GM12878 (cell line): ENCODE measurements at regions of chr9 and their contacts with region 1.

Region 1: GRCh38 chr9:126965541-126966428 is 51.2 kb downstream of the RALGPS1 start:
- DNase-seq: no peak
- ATAC-seq: peak; percentile 99
- H3K4me3 ChIP-seq: no peak overlapping the region
- H3K27ac ChIP-seq: no peak overlapping the region
- H3K4me1 ChIP-seq: no peaks in the 10 kb centered on the region
- H3K27me3 ChIP-seq: no peaks in the 10 kb centered on the region
- CTCF ChIP-seq: peak; percentile 82 to 84 (median 83)
- EP300 ChIP-seq: no peak
- POLR2A ChIP-seq: no peak
- RAD21 ChIP-seq: peak; percentile 95

Region 2: GRCh38 chr9:126523611-126524111 is 442.1 kb before region 1 on chr9:
- CTCF ChIA-PET with region 1: no interaction called
- POLR2A ChIA-PET with region 1: no interaction called
- RAD21 ChIA-PET with region 1: no interaction called
- SMC1A ChIA-PET with region 1: no interaction called
- in situ Hi-C with region 1: no loop called
- intact Hi-C with region 1: no loop called
- DNase-seq: no peak
- ATAC-seq: peak; percentile 39; the same call in 1 of the 3 replicates
- H3K4me3 ChIP-seq: no peak overlapping the region
- H3K27ac ChIP-seq: no peak overlapping the region
- H3K4me1 ChIP-seq: no peaks in the 10 kb centered on the region
- H3K27me3 ChIP-seq: peaks cover 0 to 15% of the 10 kb centered on the region in 2 experiments; a peak in 3 of 4 replicates
- CTCF ChIP-seq: no peak
- EP300 ChIP-seq: no peak
- POLR2A ChIP-seq: no peak
- RAD21 ChIP-seq: no peak

Region 3: GRCh38 chr9:126599047-126599650 is 366.6 kb before region 1 on chr9:
- CTCF ChIA-PET with region 1: no interaction called
- POLR2A ChIA-PET with region 1: no interaction called
- RAD21 ChIA-PET with region 1: no interaction called
- SMC1A ChIA-PET with region 1: no interaction called
- in situ Hi-C with region 1: no loop called
- intact Hi-C with region 1: no loop called
- DNase-seq: no peak
- ATAC-seq: no peak
- H3K4me3 ChIP-seq: no peak overlapping the region
- H3K27ac ChIP-seq: no peak overlapping the region
- H3K4me1 ChIP-seq: no peaks in the 10 kb centered on the region
- H3K27me3 ChIP-seq: no peaks in the 10 kb centered on the region; a peak in 1 of 4 replicates
- CTCF ChIP-seq: no peak
- EP300 ChIP-seq: no peak
- POLR2A ChIP-seq: no peak
- RAD21 ChIP-seq: no peak

Region 4: DNA sequence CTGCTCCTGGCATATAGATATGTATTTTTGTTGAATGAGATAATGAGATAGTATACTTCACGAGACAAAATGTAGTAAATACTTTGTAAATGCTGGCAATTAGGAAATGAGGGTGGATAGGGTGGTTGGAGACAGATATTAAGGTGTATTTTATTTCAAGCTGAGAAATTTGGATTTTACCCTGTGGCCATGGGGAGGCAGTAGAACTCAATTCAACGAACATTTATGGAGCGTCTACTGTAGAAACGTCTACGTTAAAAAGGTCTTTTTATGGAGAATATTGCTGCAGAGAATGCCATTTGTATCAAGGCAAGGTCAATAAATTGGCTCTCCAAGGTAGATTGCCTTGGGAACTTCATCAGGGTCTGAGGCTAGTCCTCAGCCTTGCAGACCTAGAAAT is 72.7 kb before region 1 on chr9:
- CTCF ChIA-PET with region 1: no interaction called
- POLR2A ChIA-PET with region 1: no interaction called
- RAD21 ChIA-PET with region 1: no interaction called
- SMC1A ChIA-PET with region 1: no interaction called
- in situ Hi-C with region 1: no loop called
- intact Hi-C with region 1: no loop called
- DNase-seq: no peak
- ATAC-seq: no peak
- H3K4me3 ChIP-seq: no peak overlapping the region
- H3K27ac ChIP-seq: no peak overlapping the region
- H3K4me1 ChIP-seq: no peaks in the 10 kb centered on the region
- H3K27me3 ChIP-seq: no peaks in the 10 kb centered on the region
- CTCF ChIP-seq: peak in 1 of 3 experiments; percentile 34; a peak in 1 of 6 replicates
- EP300 ChIP-seq: no peak
- POLR2A ChIP-seq: no peak
- RAD21 ChIP-seq: peak; percentile 35

Region 5: DNA sequence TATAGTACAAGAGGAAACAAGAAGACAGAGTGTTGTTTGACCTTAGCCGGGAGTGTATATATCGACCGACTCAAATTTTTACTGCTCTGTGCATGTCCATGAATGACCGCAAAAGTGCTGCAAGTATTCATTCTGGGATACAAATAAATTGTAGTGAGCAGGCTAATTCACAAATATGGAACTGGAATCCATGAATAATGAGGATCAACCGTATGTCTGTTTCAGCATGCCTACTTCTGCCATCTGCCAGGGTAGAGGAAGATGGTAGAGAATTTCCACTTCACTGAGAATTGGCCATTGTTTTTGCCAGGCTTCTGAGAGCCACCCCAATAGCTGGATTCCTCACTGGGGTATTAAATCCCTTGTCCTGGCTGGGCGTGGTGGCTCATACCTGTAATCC is 59.7 kb before region 1 on chr9:
- CTCF ChIA-PET with region 1: no interaction called
- POLR2A ChIA-PET with region 1: no interaction called
- RAD21 ChIA-PET with region 1: no interaction called
- SMC1A ChIA-PET with region 1: no interaction called
- in situ Hi-C with region 1: no loop called
- intact Hi-C with region 1: no loop called
- DNase-seq: no peak
- ATAC-seq: no peak
- H3K4me3 ChIP-seq: no peak overlapping the region
- H3K27ac ChIP-seq: no peak overlapping the region
- H3K4me1 ChIP-seq: no peaks in the 10 kb centered on the region
- H3K27me3 ChIP-seq: no peaks in the 10 kb centered on the region; a peak in 1 of 4 replicates
- CTCF ChIP-seq: no peak
- EP300 ChIP-seq: no peak
- POLR2A ChIP-seq: no peak
- RAD21 ChIP-seq: no peak

Region 6: DNA sequence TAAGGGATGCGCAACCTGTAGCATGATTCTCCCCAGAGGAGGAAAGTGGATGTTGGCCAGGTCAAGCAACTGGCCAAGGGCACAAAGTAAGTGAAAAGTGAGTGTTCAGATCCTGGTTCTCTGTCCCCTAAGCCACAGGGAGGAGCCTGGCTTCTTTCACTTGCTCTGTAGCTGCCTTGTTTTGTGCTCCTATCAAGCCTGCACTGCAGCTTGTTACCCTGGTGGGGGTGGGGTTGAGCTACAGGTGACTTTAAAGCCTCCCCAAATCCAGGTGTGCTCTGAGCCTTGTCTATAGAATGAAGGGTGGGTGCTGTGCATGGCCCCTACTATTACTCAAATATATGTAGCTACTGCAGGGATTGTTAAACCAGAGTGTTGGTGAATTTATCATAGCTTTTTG is 18.3 kb before region 1 on chr9:
- CTCF ChIA-PET with region 1: interaction called, 49 read pairs
- POLR2A ChIA-PET with region 1: no interaction called
- RAD21 ChIA-PET with region 1: interaction called, 23 read pairs
- SMC1A ChIA-PET with region 1: interaction called, 21 read pairs
- in situ Hi-C with region 1: no loop called
- intact Hi-C with region 1: no loop called
- DNase-seq: no peak
- ATAC-seq: peak; percentile 66
- H3K4me3 ChIP-seq: no peak overlapping the region
- H3K27ac ChIP-seq: no peak overlapping the region
- H3K4me1 ChIP-seq: no peaks in the 10 kb centered on the region
- H3K27me3 ChIP-seq: no peaks in the 10 kb centered on the region
- CTCF ChIP-seq: peak; percentile 36 to 56 (median 45); a peak in 4 of 6 replicates
- EP300 ChIP-seq: no peak
- POLR2A ChIP-seq: no peak
- RAD21 ChIP-seq: peak; percentile 59

Region 7: GRCh38 chr9:127058011-127058644 is 92.3 kb after region 1 on chr9:
- CTCF ChIA-PET with region 1: interaction called, 5 read pairs
- POLR2A ChIA-PET with region 1: no interaction called
- RAD21 ChIA-PET with region 1: interaction called, 3 read pairs
- SMC1A ChIA-PET with region 1: interaction called, 31 read pairs
- in situ Hi-C with region 1: no loop called
- intact Hi-C with region 1: no loop called
- DNase-seq: no peak
- ATAC-seq: no peak
- H3K4me3 ChIP-seq: no peak overlapping the region
- H3K27ac ChIP-seq: no peak overlapping the region
- H3K4me1 ChIP-seq: peaks cover 5% of the 10 kb centered on the region
- H3K27me3 ChIP-seq: no peaks in the 10 kb centered on the region
- CTCF ChIP-seq: no peak
- EP300 ChIP-seq: no peak
- POLR2A ChIP-seq: no peak
- RAD21 ChIP-seq: no peak

Region 8: DNA sequence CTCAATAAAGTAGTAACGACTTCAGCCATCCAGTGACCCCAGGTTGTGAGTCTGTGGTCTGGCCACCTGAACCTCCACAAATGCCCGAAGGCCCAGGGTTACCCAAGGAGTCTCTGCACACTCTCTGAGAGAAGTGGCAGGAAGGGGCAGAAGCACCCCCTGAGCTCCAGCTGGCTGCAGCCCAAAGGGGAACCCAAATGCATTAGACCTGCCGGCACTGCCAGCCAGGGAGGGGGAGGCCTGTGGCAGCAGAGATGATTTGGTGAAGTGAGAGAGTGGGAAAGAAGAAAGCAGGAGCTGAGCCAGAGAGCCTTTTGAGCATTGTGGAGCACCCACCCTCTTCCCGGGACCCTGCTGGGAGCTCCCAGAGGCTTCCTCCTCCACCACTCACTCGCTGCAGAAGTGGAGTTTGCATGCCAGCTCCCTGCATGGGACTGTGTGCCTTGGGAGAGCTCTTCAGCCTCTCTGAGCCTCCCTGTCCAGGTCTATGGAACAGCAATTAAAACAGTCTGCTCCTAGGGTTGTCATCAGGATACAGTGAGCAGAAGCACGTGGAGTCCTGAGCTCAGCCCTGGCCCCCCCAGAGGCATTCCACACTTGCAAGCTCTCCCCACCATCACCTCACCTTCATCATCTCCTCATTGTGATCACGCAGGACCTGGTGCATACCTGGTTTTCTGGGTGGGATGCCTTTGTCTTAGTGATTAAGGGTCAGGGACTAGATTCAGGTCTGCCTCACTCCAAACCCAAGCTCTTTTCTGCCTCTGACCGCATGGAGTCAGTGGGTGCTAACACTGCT is 170.5 kb after region 1 on chr9:
- CTCF ChIA-PET with region 1: interaction called, 11 read pairs
- POLR2A ChIA-PET with region 1: no interaction called
- RAD21 ChIA-PET with region 1: no interaction called
- SMC1A ChIA-PET with region 1: interaction called, 5 read pairs
- in situ Hi-C with region 1: no loop called
- intact Hi-C with region 1: no loop called
- DNase-seq: no peak
- ATAC-seq: no peak
- H3K4me3 ChIP-seq: no peak overlapping the region
- H3K27ac ChIP-seq: no peak overlapping the region
- H3K4me1 ChIP-seq: no peaks in the 10 kb centered on the region
- H3K27me3 ChIP-seq: no peaks in the 10 kb centered on the region
- CTCF ChIP-seq: no peak
- EP300 ChIP-seq: no peak
- POLR2A ChIP-seq: no peak
- RAD21 ChIP-seq: no peak